ENCODE measurements at regions of chr5 and their contacts with region 1.

Region 1: DNA sequence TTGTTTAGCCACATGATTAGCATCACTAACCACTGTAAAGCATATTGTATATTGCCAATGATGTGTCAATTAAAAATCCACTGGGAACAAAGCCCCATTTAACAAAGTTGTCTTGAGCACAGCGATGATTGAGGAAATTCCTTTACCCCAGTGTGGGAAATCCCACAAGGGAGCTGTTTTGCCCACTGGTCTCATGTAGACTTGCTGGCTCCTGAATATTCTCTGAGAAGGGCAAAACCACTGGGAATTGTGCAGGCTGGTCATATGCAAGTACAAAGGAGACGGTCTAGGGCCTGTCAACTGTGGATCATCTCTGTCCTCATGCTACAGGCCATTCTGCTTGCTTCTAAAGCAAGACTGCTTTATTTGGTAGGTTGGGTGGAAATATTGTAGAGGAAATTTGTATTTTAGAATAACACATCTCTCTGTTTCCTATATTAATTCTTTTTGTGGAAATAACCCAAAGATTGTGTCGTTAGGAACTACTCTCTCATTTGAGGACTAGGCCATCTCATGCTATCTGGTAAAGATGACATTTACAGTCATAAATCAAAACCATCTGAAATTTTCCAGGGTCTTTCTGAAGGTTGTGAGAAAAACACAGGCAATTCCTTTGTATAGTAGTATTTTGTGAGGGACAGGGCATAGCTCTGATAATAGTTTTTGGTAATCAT is 60.2 kb downstream of the PARP8 start:
- DNase-seq: no peak
- H3K4me3 Mint-ChIP-seq: no peak overlapping the region
- H3K27ac Mint-ChIP-seq: peak overlapping the region; percentile 82
- H3K4me1 Mint-ChIP-seq: peaks cover 25% of the 10 kb centered on the region
- H3K27me3 Mint-ChIP-seq: no peaks in the 10 kb centered on the region

Region 2: DNA sequence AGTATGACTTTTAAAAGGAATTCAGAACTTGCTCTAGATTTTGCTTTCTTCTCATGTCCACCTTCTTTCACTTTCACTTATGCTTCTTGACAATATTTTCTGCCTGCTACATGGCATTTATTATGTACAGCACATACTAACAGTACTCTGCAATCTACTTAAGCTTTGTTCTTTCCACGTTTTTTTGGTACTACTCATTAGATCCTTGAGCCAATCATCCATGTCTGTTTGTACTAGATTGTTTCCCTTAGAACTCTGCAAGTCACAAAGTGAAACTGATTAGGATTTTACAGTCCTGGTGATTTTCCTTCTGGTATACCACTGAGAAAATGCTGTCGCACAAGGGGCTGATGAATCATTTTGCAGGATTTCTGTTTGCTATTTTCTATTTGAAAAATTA is 18.2 kb after region 1 on chr5:
- intact Hi-C with region 1: loop called (anchors 1 kb)
- DNase-seq: no peak
- H3K4me3 Mint-ChIP-seq: peak overlapping the region; percentile 79
- H3K27ac Mint-ChIP-seq: peak overlapping the region; percentile 83
- H3K4me1 Mint-ChIP-seq: peaks cover 56% of the 10 kb centered on the region
- H3K27me3 Mint-ChIP-seq: no peaks in the 10 kb centered on the region

Region 3: GRCh38 chr5:50786073-50786472 is 59.5 kb after region 1 on chr5:
- intact Hi-C with region 1: no loop called
- DNase-seq: no peak
- H3K4me3 Mint-ChIP-seq: no peak overlapping the region
- H3K27ac Mint-ChIP-seq: no peak overlapping the region
- H3K4me1 Mint-ChIP-seq: peaks cover 6% of the 10 kb centered on the region
- H3K27me3 Mint-ChIP-seq: no peaks in the 10 kb centered on the region

Region 4: DNA sequence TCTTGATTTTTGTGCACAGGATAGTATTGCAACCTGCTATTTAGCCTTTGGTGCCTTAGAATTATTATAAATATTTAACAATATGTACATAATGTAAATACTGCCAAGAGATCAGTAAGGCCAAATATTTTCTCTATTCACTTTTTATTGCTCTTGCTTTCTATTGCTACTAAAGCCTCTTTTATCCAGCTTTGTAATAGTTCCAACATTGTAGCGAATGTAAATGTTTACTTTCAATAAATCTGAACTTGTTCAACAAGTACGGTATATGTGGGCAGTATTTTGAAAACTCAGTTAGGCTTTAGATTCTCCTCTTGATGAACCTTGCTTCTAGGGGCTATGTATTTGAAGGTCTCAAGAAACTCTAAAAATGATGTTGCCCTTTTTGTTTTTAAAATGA is 119.6 kb after region 1 on chr5:
- intact Hi-C with region 1: no loop called
- DNase-seq: no peak
- H3K4me3 Mint-ChIP-seq: no peak overlapping the region
- H3K27ac Mint-ChIP-seq: no peak overlapping the region
- H3K4me1 Mint-ChIP-seq: no peaks in the 10 kb centered on the region
- H3K27me3 Mint-ChIP-seq: no peaks in the 10 kb centered on the region